ENCODE measurements at regions of chr1 and their contacts with region 1.

Region 1: DNA sequence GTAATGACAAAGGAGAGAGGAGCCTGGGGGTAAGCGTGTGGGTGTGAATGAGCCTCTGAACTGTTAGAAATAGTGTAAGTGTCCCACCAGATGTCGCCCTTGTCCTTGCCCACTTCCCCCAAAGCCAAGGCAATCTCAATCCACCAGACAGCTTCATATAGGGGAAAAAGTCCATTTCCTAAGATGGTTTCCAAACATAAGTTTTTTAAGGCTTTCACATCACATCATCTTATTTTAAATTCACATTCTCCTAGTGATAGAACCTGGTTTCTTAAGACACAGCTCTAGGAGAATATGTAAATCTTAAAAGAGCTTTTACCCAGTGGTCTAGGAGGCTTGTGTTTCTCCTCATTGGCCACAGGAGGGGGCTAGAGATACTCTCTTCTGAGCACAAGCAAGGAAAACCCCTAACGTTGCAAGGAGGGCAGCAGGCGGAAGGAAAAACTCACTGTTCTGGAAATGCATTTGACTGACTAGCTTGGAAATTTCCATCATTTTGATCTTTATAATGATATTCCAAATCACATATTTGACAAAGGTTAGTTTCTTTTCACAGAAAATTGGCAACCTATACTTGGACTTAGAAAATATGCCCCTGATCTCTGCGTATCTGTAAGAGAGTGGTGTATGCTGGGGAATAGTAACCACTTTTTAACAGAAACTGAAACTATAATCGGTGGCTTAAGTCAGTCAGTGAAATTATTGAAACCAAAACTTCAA is 51.9 kb upstream of the LPAR3 start:
- DNase-seq: peak in 1 of 2 donors; percentile 71
- ATAC-seq: peak; percentile 96
- H3K4me3 ChIP-seq: peak overlapping the region; percentile 41 to 73
- H3K27ac ChIP-seq: no peak overlapping the region
- H3K4me1 ChIP-seq: no peaks in the 10 kb centered on the region
- H3K27me3 ChIP-seq: no peaks in the 10 kb centered on the region

Region 2: DNA sequence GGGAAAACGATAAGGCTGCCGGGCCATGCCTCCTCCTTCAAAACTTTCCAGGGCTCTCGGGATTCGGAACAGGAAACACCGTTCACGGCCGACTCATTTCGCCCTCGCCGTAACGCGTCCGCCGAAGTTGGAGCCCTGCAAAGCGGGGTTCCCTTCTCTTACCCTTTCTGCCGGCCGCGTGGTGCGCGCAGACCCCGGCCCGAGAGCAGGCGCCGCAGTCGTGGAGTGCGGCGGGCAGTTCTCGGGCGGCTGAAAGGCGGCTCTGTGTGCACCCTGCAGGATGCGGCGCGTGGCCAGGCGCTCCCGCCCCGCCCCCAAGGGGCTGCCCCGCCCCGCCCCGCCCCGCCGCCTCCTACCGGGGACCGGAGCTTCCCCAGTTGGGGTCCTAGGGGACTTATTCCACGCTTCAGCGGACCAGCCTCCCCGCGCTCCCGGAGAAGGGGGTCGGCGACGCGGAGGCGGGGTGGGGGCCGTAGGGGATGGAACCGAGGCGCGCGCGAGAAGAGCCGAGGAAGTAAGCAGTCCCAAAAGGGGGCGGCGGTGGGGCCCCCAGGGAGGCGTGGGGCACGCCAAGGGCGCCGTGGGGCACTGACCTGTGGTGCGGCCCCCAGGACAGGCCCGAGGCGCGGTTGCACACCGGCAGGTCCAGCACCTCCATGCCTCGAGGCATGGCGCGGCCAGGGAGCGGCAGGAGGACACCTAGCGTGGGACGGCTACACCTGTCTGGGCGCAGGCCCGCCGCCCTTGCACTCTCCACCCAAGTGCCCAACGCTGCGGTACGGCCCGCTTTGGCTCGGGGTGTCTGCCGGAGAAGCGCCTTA is 52.1 kb after region 1 on chr1 and contains the start of gene MCOLN2:
- intact Hi-C with region 1: loop called in 1 of 2 experiments (anchors 5 kb)
- DNase-seq: peak in 1 of 2 donors; percentile 52
- ATAC-seq: peak; percentile 75
- H3K4me3 ChIP-seq: peak within 1 kb of the TSS; percentile 67 to 85
- H3K27ac ChIP-seq: no peak within 1 kb of the TSS
- H3K4me1 ChIP-seq: no peaks in the 10 kb centered on the region
- H3K27me3 ChIP-seq: no peaks in the 10 kb centered on the region
- total RNA-seq, gene MCOLN2: 1.1 to 3.9 TPM

Region 3: DNA sequence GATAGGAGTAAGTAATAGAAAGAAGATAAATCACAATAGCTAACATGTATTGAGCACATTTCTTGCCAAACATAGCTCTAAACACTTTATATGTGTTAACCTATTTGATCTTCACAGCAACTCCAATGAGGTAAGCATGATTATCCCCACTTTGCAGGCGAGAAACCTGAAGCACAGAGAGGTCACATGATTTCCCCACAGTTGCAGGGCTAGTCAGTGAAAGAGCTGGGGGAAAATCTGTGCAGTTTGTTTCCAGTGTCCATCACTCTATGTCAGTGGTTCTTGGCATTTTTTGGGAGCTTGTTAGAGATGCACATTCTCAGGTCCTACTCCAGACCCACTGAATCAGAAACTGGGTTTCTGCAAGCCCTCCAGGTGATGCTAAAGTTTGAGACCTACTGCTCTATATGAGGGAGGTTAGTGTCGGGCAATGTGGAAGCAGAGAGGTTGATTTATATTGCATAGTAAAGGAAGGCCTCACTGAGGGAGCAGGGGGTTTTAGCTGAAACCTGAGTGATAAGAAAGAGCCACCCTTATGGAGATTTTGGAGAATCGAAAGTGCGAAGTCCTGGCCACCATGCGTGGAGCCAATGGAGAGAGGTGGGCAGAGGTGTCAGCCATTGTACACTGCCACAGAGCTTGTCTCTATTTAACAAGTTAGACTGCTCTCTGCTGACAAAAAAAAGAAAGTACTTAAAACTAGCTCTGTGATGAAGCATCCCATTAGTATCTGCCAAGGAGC is 82.5 kb after region 1 on chr1:
- intact Hi-C with region 1: loop called (anchors 1 to 5 kb)
- DNase-seq: no peak
- ATAC-seq: peak; percentile 41
- H3K4me3 ChIP-seq: no peak overlapping the region
- H3K27ac ChIP-seq: no peak overlapping the region
- H3K4me1 ChIP-seq: no peaks in the 10 kb centered on the region
- H3K27me3 ChIP-seq: no peaks in the 10 kb centered on the region

Region 4: GRCh38 chr1:85061711-85062424 is 116.9 kb after region 1 on chr1:
- intact Hi-C with region 1: loop called in 1 of 2 experiments (anchors 10 kb)
- DNase-seq: peak; percentile 89 to 93
- ATAC-seq: peak; percentile 97
- H3K4me3 ChIP-seq: peak overlapping the region; percentile 41 to 60
- H3K27ac ChIP-seq: peak overlapping the region in 1 of 2 donors; percentile 22
- H3K4me1 ChIP-seq: no peaks in the 10 kb centered on the region
- H3K27me3 ChIP-seq: no peaks in the 10 kb centered on the region

Region 5: DNA sequence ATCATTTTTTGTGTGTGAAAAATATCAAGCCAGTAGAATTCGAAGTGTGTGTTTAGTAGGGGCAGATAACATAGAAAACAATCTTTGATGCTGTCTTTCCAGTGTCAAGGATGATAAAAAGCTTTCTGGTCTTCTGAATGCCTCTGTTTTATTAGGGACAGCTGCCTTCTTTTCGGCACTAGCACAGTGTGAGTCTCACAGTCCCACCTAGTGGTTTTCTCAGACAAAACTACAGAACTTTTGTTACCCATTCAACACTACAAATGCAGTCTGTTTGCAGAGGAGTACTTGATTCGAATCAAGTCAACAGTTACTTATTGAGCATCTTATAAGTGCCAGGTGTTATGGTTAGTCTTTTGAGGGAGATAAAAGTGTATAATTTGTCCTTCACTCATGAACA is 134.0 kb after region 1 on chr1:
- intact Hi-C with region 1: loop called in 1 of 2 experiments (anchors 2 kb)
- DNase-seq: no peak
- ATAC-seq: no peak
- H3K4me3 ChIP-seq: no peak overlapping the region
- H3K27ac ChIP-seq: no peak overlapping the region
- H3K4me1 ChIP-seq: no peaks in the 10 kb centered on the region
- H3K27me3 ChIP-seq: no peaks in the 10 kb centered on the region

Region 6: DNA sequence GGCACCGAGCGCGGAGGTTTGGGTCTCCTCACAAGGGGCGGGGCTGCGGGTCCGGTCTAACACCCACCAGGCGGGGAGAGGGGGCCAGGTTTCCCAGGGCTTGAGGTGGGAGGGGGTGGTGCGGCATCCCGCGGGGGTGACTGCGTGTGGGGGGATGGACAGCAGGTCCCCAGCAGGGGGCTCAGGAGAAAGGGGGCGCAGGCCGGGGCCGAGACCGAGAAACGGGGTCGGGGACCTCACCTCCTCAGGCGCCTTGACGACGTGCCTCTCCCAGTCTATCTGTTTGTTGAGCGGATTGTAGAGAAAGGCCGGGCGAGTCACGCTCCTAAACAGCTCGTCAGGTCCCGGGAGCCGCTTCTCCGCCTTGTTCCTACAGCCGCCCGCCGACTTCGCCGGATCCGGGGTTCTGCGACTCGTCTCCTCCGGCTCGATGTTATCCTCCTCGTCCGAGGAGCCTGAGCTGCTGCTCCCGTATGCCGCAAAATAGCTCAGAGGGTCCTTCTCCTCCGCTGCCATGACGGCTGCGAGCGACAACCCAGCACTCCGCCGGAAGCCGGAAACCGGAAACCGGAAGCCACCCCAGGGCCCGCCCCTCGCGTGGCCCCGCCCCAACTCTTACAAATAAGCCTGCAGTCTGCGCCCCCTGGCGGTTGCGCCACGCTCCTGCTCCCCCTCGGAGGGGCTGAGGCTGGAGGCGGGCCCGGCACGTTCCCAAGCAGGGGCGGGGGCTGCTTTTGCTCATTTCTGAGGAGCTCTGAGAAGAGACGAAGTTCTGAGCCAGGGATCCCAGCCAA is 314.4 kb after region 1 on chr1 and contains the start of gene C1orf52:
- intact Hi-C with region 1: loop called in 1 of 2 experiments (anchors 5 kb)
- DNase-seq: peak; percentile 97 to 100
- ATAC-seq: peak; percentile 99
- H3K4me3 ChIP-seq: peak within 1 kb of the TSS; percentile 88 to 89
- H3K27ac ChIP-seq: peak within 1 kb of the TSS in 1 of 2 donors; percentile 66
- H3K4me1 ChIP-seq: no peaks in the 10 kb centered on the region
- H3K27me3 ChIP-seq: no peaks in the 10 kb centered on the region
- total RNA-seq, gene C1orf52: 25.8 to 28.3 TPM

Measured in aorta (tissue), 5 donors.